CD8-positive, alpha-beta T cell (primary cell): ENCODE measurements at regions of chr12 and their contacts with region 1.

Region 1: GRCh38 chr12:123150744-123151456 is at the start of gene PITPNM2:
- DNase-seq: peak; percentile 14 to 82 (median 61)
- ATAC-seq: peak; percentile 86
- H3K4me3 ChIP-seq: peak within 1 kb of the TSS; percentile 60 to 83
- H3K4me3 Mint-ChIP-seq: peak within 1 kb of the TSS; percentile 84
- H3K27ac ChIP-seq: peak within 1 kb of the TSS in 1 of 2 experiments; percentile 47
- H3K27ac Mint-ChIP-seq: peak within 1 kb of the TSS; percentile 80
- H3K4me1 ChIP-seq: peaks cover 37% of the 10 kb centered on the region
- H3K4me1 Mint-ChIP-seq: peaks cover 43% of the 10 kb centered on the region
- H3K27me3 ChIP-seq: no peaks in the 10 kb centered on the region
- H3K27me3 Mint-ChIP-seq: no peaks in the 10 kb centered on the region
- CTCF ChIP-seq: no peak
- total RNA-seq, gene PITPNM2: 28.1 to 29.2 TPM

Region 2: GRCh38 chr12:122974274-122974891 is 176.5 kb before region 1 on chr12:
- CTCF ChIA-PET with region 1: no interaction called
- POLR2A ChIA-PET with region 1: no interaction called
- intact Hi-C with region 1: loop called in 1 of 2 experiments (anchors 2 kb)
- DNase-seq: peak; percentile 97 to 100 (median 99)
- ATAC-seq: peak; percentile 85
- H3K4me3 ChIP-seq: peak overlapping the region; percentile 91 to 93
- H3K4me3 Mint-ChIP-seq: peak overlapping the region; percentile 98
- H3K27ac ChIP-seq: peak overlapping the region; percentile 93 to 97
- H3K27ac Mint-ChIP-seq: peak overlapping the region; percentile 98
- H3K4me1 ChIP-seq: peaks cover 26% of the 10 kb centered on the region
- H3K4me1 Mint-ChIP-seq: peaks cover 31% of the 10 kb centered on the region
- H3K27me3 ChIP-seq: no peaks in the 10 kb centered on the region
- H3K27me3 Mint-ChIP-seq: no peaks in the 10 kb centered on the region
- CTCF ChIP-seq: no peak

Region 3: GRCh38 chr12:122980183-122981046 is 170.5 kb before region 1 on chr12 and contains the start of gene ARL6IP4:
- CTCF ChIA-PET with region 1: no interaction called
- POLR2A ChIA-PET with region 1: no interaction called
- intact Hi-C with region 1: loop called (anchors 1 to 5 kb)
- DNase-seq: peak; percentile 27 to 84 (median 64)
- ATAC-seq: peak; percentile 75
- H3K4me3 ChIP-seq: peak within 1 kb of the TSS; percentile 67 to 82
- H3K4me3 Mint-ChIP-seq: peak within 1 kb of the TSS; percentile 88
- H3K27ac ChIP-seq: peak within 1 kb of the TSS; percentile 67 to 69
- H3K27ac Mint-ChIP-seq: peak within 1 kb of the TSS; percentile 87
- H3K4me1 ChIP-seq: peaks cover 60% of the 10 kb centered on the region
- H3K4me1 Mint-ChIP-seq: peaks cover 61% of the 10 kb centered on the region
- H3K27me3 ChIP-seq: no peaks in the 10 kb centered on the region
- H3K27me3 Mint-ChIP-seq: no peaks in the 10 kb centered on the region
- CTCF ChIP-seq: no peak
- total RNA-seq, gene ARL6IP4: 130 to 131 TPM

Region 4: DNA sequence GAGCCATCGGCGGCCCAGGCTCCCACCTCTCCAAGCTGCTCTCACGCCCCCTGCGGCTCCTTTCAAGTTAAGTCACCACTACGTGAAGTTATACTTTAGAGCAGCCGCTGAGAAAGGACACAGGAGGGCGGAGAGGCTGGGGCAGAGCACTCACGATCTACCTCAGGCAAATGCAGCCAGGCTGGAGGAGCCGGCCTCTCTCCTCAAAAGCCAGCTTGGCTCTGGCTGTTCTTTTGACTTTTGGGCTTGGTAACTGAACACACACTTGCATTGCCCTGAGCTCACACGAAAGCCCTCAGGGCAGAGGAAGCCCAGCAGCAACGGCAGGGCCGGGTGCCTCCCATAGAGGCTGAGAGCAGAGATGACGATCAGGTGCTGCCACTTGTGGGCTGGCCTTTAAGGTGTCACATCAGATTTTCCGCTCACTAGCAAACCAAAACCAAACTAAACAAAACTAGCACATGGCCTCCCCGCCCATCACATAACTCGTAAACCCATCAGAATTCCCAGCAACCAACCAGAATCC is 75.2 kb before region 1 on chr12:
- CTCF ChIA-PET with region 1: interaction called, 20 read pairs
- POLR2A ChIA-PET with region 1: interaction called, 31 read pairs
- intact Hi-C with region 1: loop called (anchors 1 to 2 kb)
- DNase-seq: peak; percentile 32 to 87 (median 77)
- ATAC-seq: peak; percentile 81
- H3K4me3 ChIP-seq: peak overlapping the region; percentile 56 to 66
- H3K4me3 Mint-ChIP-seq: peak overlapping the region; percentile 90
- H3K27ac ChIP-seq: peak overlapping the region; percentile 71 to 81
- H3K27ac Mint-ChIP-seq: peak overlapping the region; percentile 95
- H3K4me1 ChIP-seq: peaks cover 49% of the 10 kb centered on the region
- H3K4me1 Mint-ChIP-seq: peaks cover 63% of the 10 kb centered on the region
- H3K27me3 ChIP-seq: no peaks in the 10 kb centered on the region
- H3K27me3 Mint-ChIP-seq: no peaks in the 10 kb centered on the region
- CTCF ChIP-seq: peak; percentile 49

Region 5: GRCh38 chr12:123106628-123107359 is 44.1 kb before region 1 on chr12:
- CTCF ChIA-PET with region 1: interaction called, 5 read pairs
- POLR2A ChIA-PET with region 1: interaction called, 5 read pairs
- intact Hi-C with region 1: loop called in 1 of 2 experiments (anchors 2 kb)
- DNase-seq: peak in 8 of 9 experiments; percentile 48 to 81 (median 60)
- ATAC-seq: peak; percentile 86
- H3K4me3 ChIP-seq: peak overlapping the region; percentile 0 to 26
- H3K4me3 Mint-ChIP-seq: peak overlapping the region; percentile 66
- H3K27ac ChIP-seq: peak overlapping the region; percentile 52 to 82
- H3K27ac Mint-ChIP-seq: peak overlapping the region; percentile 98
- H3K4me1 ChIP-seq: peaks cover 53% of the 10 kb centered on the region
- H3K4me1 Mint-ChIP-seq: peaks cover 72% of the 10 kb centered on the region
- H3K27me3 ChIP-seq: no peaks in the 10 kb centered on the region
- H3K27me3 Mint-ChIP-seq: no peaks in the 10 kb centered on the region
- CTCF ChIP-seq: no peak

Region 6: DNA sequence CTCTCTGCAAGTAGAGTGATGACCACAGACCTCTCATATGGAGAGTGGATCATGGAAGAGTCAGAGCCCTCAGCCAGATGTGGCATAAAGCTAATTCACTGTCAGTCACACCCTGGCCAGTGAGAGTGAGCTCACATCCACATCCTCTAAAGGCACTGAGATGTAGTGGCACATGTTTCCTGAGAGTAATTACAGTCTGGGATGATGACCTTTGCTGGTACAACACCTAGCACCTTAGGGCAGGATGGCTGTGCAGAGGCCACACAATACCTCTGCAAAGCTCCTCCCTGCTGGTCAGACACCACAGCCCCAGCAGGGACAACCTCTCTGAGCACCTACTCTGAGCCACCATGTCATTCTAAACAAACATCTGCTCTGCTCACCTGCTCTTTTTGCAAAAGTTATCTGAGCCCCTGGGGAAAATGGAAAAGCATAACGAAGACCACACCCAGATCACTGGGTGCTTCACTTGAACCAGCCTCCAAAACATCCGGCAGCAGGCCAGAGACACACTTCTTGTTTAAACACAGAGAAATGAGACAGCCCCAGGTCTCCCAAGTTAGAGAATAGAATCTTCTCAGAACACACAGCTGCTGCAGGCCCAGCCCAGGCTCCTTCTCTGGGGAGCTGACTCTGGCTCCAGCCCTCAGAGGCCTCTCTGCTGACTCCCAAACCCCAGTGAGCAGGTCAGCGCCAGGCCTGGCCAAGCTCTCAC is 30.3 kb before region 1 on chr12:
- CTCF ChIA-PET with region 1: interaction called, 8 read pairs
- POLR2A ChIA-PET with region 1: interaction called, 7 read pairs
- intact Hi-C with region 1: loop called in 1 of 2 experiments (anchors 1 kb)
- DNase-seq: peak in 6 of 9 experiments; percentile 23 to 72 (median 36)
- ATAC-seq: peak; percentile 48
- H3K4me3 ChIP-seq: peak overlapping the region in 1 of 2 experiments; percentile 20
- H3K4me3 Mint-ChIP-seq: peak overlapping the region; percentile 60
- H3K27ac ChIP-seq: peak overlapping the region; percentile 58 to 72
- H3K27ac Mint-ChIP-seq: peak overlapping the region; percentile 98
- H3K4me1 ChIP-seq: peaks cover 51% of the 10 kb centered on the region
- H3K4me1 Mint-ChIP-seq: peaks cover 66% of the 10 kb centered on the region
- H3K27me3 ChIP-seq: no peaks in the 10 kb centered on the region
- H3K27me3 Mint-ChIP-seq: no peaks in the 10 kb centered on the region
- CTCF ChIP-seq: no peak

Region 7: DNA sequence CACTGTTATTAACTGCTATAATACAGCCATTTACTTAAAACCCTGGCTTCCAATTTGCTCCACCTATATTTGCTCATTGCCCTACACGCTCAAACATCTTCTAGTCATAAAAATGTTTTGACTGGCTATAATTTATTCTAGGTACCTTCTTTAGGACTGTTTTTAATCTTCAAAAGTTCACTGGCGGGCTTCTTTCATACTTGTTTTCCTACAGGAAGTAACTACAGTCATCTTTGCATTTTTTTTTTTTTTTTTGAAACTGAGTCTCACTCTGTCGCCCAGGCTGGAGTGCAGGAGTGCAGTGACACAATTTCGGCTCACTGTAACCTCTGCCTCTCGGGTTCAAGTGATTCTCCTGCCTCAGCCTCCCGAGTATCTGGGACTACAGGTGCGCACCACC is 49.5 kb after region 1 on chr12:
- CTCF ChIA-PET with region 1: no interaction called
- POLR2A ChIA-PET with region 1: no interaction called
- intact Hi-C with region 1: no loop called
- DNase-seq: peak in 2 of 9 experiments; percentile 13 to 25
- ATAC-seq: peak; percentile 48
- H3K4me3 ChIP-seq: no peak overlapping the region
- H3K4me3 Mint-ChIP-seq: peak overlapping the region; percentile 2
- H3K27ac ChIP-seq: peak overlapping the region; percentile 12 to 36
- H3K27ac Mint-ChIP-seq: peak overlapping the region; percentile 84
- H3K4me1 ChIP-seq: peaks cover 9% of the 10 kb centered on the region
- H3K4me1 Mint-ChIP-seq: peaks cover 20% of the 10 kb centered on the region
- H3K27me3 ChIP-seq: no peaks in the 10 kb centered on the region
- H3K27me3 Mint-ChIP-seq: no peaks in the 10 kb centered on the region
- CTCF ChIP-seq: no peak